ENCODE measurements at regions of chr1 and their contacts with region 1.

Region 1: GRCh38 chr1:234722904-234723720 is 113.1 kb upstream of the IRF2BP2 start:
- DNase-seq: peak; percentile 91
- H3K4me3 Mint-ChIP-seq: peak overlapping the region; percentile 70
- H3K27ac Mint-ChIP-seq: peak overlapping the region; percentile 97
- H3K4me1 Mint-ChIP-seq: peaks cover 61% of the 10 kb centered on the region
- H3K27me3 Mint-ChIP-seq: no peaks in the 10 kb centered on the region

Region 2: DNA sequence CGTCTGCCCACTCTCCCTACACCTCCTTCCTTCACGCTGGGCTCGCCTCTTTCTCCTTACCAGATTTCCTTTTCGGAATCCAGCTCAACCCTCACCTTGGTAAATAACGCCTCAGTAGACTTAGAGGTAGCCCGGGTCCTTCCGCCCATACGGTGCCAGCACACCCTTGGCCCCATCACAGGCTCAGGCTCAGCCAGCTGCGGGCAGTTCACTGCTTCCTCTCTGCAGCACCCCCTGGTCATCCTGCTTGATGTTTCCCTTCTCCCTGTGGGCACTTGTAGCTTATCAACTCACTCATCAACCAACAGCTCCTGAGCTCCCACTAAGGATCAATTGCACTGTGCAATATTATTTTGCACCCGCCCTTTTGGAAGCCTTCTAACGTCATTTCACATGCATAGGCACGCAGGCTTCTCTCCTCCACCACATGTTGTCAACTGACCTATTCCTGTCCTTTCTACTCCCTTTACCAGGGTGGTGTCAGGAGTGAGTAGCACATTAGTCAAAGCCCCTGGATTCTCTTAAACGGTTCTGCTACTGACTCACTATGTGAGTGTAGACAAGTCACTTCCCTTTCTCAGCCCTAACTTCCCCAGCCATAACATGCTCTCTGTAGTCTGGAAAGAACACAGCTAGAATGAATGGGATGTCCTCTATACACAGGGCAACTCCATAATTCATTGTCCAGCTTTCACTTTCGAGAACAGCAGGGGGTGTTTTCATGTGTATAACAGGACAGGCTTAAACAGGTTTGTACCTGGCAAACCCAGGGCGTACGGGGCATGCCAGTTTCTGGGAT is 66.1 kb before region 1 on chr1:
- CTCF ChIA-PET with region 1: interaction called, 3 read pairs
- intact Hi-C with region 1: loop called (anchors 1 kb)
- DNase-seq: peak; percentile 55
- H3K4me3 Mint-ChIP-seq: no peak overlapping the region
- H3K27ac Mint-ChIP-seq: no peak overlapping the region
- H3K4me1 Mint-ChIP-seq: peaks cover 13% of the 10 kb centered on the region
- H3K27me3 Mint-ChIP-seq: no peaks in the 10 kb centered on the region

Region 3: GRCh38 chr1:234737967-234738314 is 14.8 kb after region 1 on chr1:
- CTCF ChIA-PET with region 1: no interaction called
- intact Hi-C with region 1: no loop called
- DNase-seq: no peak
- H3K4me3 Mint-ChIP-seq: no peak overlapping the region
- H3K27ac Mint-ChIP-seq: no peak overlapping the region
- H3K4me1 Mint-ChIP-seq: no peaks in the 10 kb centered on the region
- H3K27me3 Mint-ChIP-seq: no peaks in the 10 kb centered on the region

Region 4: DNA sequence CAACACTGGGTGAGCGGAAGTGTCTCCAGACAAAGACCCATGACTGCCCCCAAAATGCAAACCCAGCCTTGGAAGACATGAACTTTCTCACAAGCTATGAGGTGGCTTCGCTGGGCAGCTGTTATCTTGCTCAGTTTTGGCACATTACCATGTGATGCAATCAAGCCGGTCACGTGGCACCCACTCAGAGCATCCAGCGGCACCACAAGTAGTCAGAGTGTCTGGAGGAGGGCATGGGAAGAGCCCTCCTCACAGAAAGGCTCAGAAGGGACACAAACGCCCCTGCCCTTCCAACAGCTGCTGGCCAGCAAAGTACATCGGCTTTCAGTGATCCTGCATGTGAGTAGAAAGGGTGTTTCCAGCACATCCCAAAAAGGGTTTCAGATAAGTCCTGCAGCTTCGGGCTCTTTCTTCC is 32.3 kb after region 1 on chr1:
- CTCF ChIA-PET with region 1: no interaction called
- intact Hi-C with region 1: no loop called
- DNase-seq: no peak
- H3K4me3 Mint-ChIP-seq: no peak overlapping the region
- H3K27ac Mint-ChIP-seq: no peak overlapping the region
- H3K4me1 Mint-ChIP-seq: peaks cover 14% of the 10 kb centered on the region
- H3K27me3 Mint-ChIP-seq: no peaks in the 10 kb centered on the region

Region 5: GRCh38 chr1:234933475-234933874 is 210.4 kb after region 1 on chr1:
- CTCF ChIA-PET with region 1: no interaction called
- intact Hi-C with region 1: loop called (anchors 1 kb)
- DNase-seq: peak; percentile 61
- H3K4me3 Mint-ChIP-seq: no peak overlapping the region
- H3K27ac Mint-ChIP-seq: peak overlapping the region; percentile 84
- H3K4me1 Mint-ChIP-seq: peaks cover 58% of the 10 kb centered on the region
- H3K27me3 Mint-ChIP-seq: no peaks in the 10 kb centered on the region

Region 6: DNA sequence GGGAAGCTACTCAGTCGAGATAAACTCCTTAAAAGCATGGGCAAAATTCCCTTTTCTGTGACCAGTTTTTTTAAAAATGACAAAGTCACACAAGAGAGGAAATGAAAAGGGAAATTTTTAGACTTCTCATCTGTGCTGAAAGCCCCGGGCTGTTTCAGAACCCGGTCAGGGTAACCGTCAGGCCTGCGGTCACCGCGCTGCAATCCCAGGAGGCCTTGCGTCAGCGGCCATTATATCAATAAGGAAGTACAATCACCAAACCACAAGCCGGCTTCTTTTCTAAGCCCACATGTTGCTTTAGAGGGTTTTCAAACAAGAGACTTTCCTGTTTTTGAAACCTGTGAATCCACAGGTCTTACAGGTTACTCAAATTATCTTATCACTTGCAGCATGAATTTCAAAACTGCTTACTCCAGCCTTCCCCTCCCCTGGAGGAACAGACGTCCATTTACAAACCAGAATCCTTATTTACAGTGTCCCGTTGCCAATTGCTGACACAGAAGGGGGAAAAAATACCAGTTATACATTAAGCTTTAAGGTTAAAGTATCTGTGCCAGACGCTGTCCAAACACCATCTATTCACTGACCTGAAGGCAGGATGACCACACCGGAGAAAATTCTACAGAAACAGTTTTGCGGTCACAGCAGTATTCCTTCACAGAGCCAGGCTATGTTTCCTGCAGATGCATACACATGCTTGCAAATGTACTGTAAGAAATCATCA is 240.2 kb after region 1 on chr1:
- CTCF ChIA-PET with region 1: no interaction called
- intact Hi-C with region 1: loop called (anchors 1 kb)
- DNase-seq: peak; percentile 98
- H3K4me3 Mint-ChIP-seq: peak overlapping the region; percentile 35
- H3K27ac Mint-ChIP-seq: peak overlapping the region; percentile 97
- H3K4me1 Mint-ChIP-seq: peaks cover 72% of the 10 kb centered on the region
- H3K27me3 Mint-ChIP-seq: no peaks in the 10 kb centered on the region

Region 7: GRCh38 chr1:234978397-234979295 is 255.5 kb after region 1 on chr1:
- CTCF ChIA-PET with region 1: no interaction called
- intact Hi-C with region 1: loop called (anchors 2 kb)
- DNase-seq: peak; percentile 81
- H3K4me3 Mint-ChIP-seq: peak overlapping the region; percentile 79
- H3K27ac Mint-ChIP-seq: peak overlapping the region; percentile 97
- H3K4me1 Mint-ChIP-seq: peaks cover 59% of the 10 kb centered on the region
- H3K27me3 Mint-ChIP-seq: no peaks in the 10 kb centered on the region

Region 8: GRCh38 chr1:235075188-235075926 is 352.2 kb after region 1 on chr1:
- CTCF ChIA-PET with region 1: no interaction called
- intact Hi-C with region 1: loop called (anchors 2 kb)
- DNase-seq: peak; percentile 83
- H3K4me3 Mint-ChIP-seq: peak overlapping the region; percentile 0
- H3K27ac Mint-ChIP-seq: peak overlapping the region; percentile 90
- H3K4me1 Mint-ChIP-seq: peaks cover 36% of the 10 kb centered on the region
- H3K27me3 Mint-ChIP-seq: no peaks in the 10 kb centered on the region

Measured in activated naive CD4-positive, alpha-beta T cell treated with anti-CD3 and anti-CD28 coated beads for 36 hours (primary cell).